A549 (cell line): ENCODE measurements at regions of chr16 and their contacts with region 1.

Region 1: GRCh38 chr16:72832621-72833248 is 215.2 kb downstream of the ZFHX3 start:
- DNase-seq: peak; percentile 71 to 73
- ATAC-seq: peak; percentile 89 to 94
- H3K4me3 ChIP-seq: no peak overlapping the region
- H3K27ac ChIP-seq: peak overlapping the region; percentile 19 to 38; a peak in 4 of 6 replicates
- H3K4me1 ChIP-seq: peaks cover 29% of the 10 kb centered on the region
- CTCF ChIP-seq: peak; percentile 92
- EP300 ChIP-seq: no peak
- POLR2A ChIP-seq: no peak
- RAD21 ChIP-seq: peak; percentile 91 to 95

Region 2: GRCh38 chr16:72797621-72798020 is 35.1 kb before region 1 on chr16:
- CTCF ChIA-PET with region 1: interaction called, 10 read pairs
- POLR2A ChIA-PET with region 1: no interaction called
- DNase-seq: no peak
- ATAC-seq: no peak
- H3K4me3 ChIP-seq: no peak overlapping the region
- H3K27ac ChIP-seq: no peak overlapping the region
- H3K4me1 ChIP-seq: no peaks in the 10 kb centered on the region
- CTCF ChIP-seq: no peak
- EP300 ChIP-seq: no peak
- POLR2A ChIP-seq: no peak
- RAD21 ChIP-seq: no peak

Region 3: DNA sequence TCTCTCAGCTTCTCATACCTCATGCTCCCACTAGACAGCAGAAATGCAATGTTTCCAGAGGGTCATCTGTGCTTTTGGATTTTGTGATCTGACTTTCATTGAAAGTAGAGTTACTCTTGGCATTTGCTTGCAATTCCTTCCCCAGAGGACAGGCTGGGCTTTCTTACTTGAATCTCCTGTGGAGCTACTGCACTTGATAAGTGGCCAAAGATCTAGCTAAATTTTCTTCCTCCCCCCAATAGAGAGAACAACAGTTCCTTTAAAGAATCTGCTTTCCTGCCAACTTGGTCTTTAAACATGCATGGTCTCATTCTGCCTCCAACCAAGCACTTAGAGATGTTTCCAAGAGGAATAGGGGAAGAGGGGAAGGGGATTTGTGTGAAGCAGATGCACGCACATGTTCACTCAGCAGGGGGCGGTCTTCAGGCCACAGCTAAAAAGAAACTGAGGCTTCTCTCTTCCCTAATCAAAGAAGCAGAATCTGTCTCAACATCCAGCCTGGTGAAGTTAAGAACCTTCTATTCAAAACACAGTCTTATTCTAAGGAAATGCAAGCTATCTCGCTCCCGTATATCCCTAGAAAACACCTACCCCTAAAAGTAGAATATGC is 14.4 kb before region 1 on chr16:
- CTCF ChIA-PET with region 1: interaction called, 14 read pairs
- POLR2A ChIA-PET with region 1: no interaction called
- DNase-seq: no peak
- ATAC-seq: no peak
- H3K4me3 ChIP-seq: no peak overlapping the region
- H3K27ac ChIP-seq: no peak overlapping the region
- H3K4me1 ChIP-seq: peaks cover 11% of the 10 kb centered on the region; the same call in 2 of the 3 replicates
- CTCF ChIP-seq: no peak
- EP300 ChIP-seq: no peak
- POLR2A ChIP-seq: no peak
- RAD21 ChIP-seq: no peak

Region 4: DNA sequence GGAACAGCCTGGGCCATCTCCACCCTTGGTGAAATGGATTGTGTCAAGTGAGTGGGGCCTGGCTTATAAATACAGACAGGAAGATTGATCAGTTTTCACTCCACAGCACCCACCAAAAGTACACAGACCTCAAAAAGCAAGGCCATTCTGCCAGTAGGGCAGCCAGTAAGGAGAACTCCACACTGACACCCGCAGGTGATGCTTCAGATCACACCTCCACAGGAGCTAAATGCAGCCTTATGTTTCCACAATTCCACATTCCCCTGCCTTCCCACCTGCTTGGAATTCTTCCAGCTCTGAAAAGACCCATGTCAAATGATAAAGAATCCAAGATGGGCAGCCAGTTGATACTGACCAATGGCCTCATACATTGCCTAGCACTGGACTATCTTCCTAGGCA is 24.1 kb after region 1 on chr16:
- CTCF ChIA-PET with region 1: interaction called, 30 read pairs
- POLR2A ChIA-PET with region 1: no interaction called
- DNase-seq: peak; percentile 30 to 43
- ATAC-seq: peak; percentile 80 to 84
- H3K4me3 ChIP-seq: no peak overlapping the region
- H3K27ac ChIP-seq: no peak overlapping the region
- H3K4me1 ChIP-seq: no peaks in the 10 kb centered on the region
- CTCF ChIP-seq: peak; percentile 15; the same call in 1 of the 3 replicates
- EP300 ChIP-seq: no peak
- POLR2A ChIP-seq: no peak
- RAD21 ChIP-seq: peak in 1 of 2 experiments; percentile 17; a peak in 1 of 5 replicates

Region 5: GRCh38 chr16:73020362-73020884 is 187.7 kb after region 1 on chr16:
- CTCF ChIA-PET with region 1: interaction called, 11 read pairs
- POLR2A ChIA-PET with region 1: no interaction called
- DNase-seq: peak; percentile 84 to 90
- ATAC-seq: peak; percentile 78 to 82
- H3K4me3 ChIP-seq: peak overlapping the region; percentile 26
- H3K27ac ChIP-seq: peak overlapping the region; percentile 91 to 95
- H3K4me1 ChIP-seq: peaks cover 93% of the 10 kb centered on the region
- CTCF ChIP-seq: no peak
- EP300 ChIP-seq: peak; percentile 63 to 83; a peak in 3 of 5 replicates
- POLR2A ChIP-seq: no peak
- RAD21 ChIP-seq: peak in 1 of 2 experiments; percentile 54; a peak in 2 of 5 replicates

Region 6: DNA sequence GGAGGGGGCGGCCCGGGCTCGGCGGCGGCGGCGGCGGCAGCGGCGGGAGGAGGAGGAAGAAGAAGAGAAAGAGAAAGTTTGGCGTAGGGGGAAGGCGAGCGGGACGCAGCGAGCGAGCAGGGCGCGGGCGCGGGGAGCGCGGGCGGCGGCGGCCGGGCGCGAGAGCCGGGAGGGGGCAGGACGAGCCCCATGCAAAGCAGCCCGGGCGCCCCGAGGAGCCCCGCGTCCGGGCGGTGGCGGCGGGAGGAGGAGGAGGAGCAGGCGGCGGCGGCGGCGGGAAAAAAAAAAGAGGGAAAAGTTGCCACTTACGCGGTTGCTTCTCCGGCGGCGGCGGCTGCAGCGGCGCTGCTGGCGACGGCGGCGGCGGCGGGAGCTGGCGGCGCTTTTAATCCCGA is 225.5 kb after region 1 on chr16:
- CTCF ChIA-PET with region 1: interaction called, 10 read pairs
- POLR2A ChIA-PET with region 1: interaction called, 3 read pairs
- DNase-seq: no peak
- ATAC-seq: peak in 1 of 2 experiments; percentile 43; a peak in 3 of 6 replicates
- H3K4me3 ChIP-seq: peak overlapping the region; percentile 84
- H3K27ac ChIP-seq: peak overlapping the region; percentile 99
- H3K4me1 ChIP-seq: peaks cover 41% of the 10 kb centered on the region
- CTCF ChIP-seq: no peak
- EP300 ChIP-seq: no peak
- POLR2A ChIP-seq: no peak
- RAD21 ChIP-seq: no peak